GM12878 (cell line): ENCODE measurements at regions of chr3 and their contacts with region 1.

Region 1: DNA sequence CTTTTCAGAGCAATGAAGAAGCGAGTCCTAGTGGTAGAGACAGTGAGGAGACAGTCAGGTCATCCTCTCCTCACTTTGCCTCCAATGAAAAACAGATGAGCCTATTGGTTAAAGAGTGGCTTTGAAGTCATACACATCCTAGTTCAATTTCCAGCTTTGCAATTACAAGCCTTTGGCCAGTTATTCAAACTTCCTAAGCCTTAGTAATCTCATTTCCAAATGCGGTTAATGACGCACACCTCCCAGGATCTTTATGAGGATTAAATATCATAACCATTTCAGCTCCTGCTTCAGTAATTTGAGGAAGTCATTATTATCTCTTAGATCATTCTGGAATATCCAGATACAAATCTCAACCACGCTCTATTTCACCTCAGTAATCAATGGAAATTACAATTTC is 10.0 kb upstream of the ST6GAL1 start:
- DNase-seq: no peak
- ATAC-seq: no peak
- H3K4me3 ChIP-seq: no peak overlapping the region
- H3K27ac ChIP-seq: no peak overlapping the region
- H3K4me1 ChIP-seq: no peaks in the 10 kb centered on the region
- H3K27me3 ChIP-seq: no peaks in the 10 kb centered on the region; a peak in 1 of 4 replicates
- CTCF ChIP-seq: no peak
- EP300 ChIP-seq: no peak
- POLR2A ChIP-seq: no peak
- RAD21 ChIP-seq: no peak

Region 2: DNA sequence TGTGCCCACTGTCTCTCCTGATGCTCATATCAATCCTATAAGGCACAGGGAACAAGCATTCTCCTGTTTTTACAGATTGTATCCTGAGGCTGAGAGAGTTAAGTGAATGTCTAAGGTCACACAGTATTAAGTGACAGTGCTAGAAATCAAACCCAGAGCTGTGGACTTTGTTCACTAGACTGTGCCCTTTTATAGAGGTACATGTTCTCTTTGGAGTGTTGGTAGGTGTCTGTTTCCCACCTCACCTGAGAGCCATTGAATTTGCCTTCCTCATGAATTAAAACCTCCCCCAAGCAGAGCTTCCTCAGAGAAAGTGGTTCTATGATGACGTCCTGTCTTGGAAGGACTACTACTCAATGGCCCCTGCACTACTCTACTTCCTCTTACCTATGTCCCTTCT is 65.3 kb before region 1 on chr3:
- CTCF ChIA-PET with region 1: no interaction called
- POLR2A ChIA-PET with region 1: no interaction called
- RAD21 ChIA-PET with region 1: interaction called, 5 read pairs
- SMC1A ChIA-PET with region 1: interaction called, 4 read pairs
- in situ Hi-C with region 1: loop called (anchors 5 kb)
- intact Hi-C with region 1: loop called (anchors 5 kb)
- DNase-seq: no peak
- ATAC-seq: no peak
- H3K4me3 ChIP-seq: no peak overlapping the region
- H3K27ac ChIP-seq: no peak overlapping the region
- H3K4me1 ChIP-seq: no peaks in the 10 kb centered on the region
- H3K27me3 ChIP-seq: no peaks in the 10 kb centered on the region; a peak in 3 of 4 replicates
- CTCF ChIP-seq: no peak
- EP300 ChIP-seq: no peak
- POLR2A ChIP-seq: no peak
- RAD21 ChIP-seq: no peak

Region 3: DNA sequence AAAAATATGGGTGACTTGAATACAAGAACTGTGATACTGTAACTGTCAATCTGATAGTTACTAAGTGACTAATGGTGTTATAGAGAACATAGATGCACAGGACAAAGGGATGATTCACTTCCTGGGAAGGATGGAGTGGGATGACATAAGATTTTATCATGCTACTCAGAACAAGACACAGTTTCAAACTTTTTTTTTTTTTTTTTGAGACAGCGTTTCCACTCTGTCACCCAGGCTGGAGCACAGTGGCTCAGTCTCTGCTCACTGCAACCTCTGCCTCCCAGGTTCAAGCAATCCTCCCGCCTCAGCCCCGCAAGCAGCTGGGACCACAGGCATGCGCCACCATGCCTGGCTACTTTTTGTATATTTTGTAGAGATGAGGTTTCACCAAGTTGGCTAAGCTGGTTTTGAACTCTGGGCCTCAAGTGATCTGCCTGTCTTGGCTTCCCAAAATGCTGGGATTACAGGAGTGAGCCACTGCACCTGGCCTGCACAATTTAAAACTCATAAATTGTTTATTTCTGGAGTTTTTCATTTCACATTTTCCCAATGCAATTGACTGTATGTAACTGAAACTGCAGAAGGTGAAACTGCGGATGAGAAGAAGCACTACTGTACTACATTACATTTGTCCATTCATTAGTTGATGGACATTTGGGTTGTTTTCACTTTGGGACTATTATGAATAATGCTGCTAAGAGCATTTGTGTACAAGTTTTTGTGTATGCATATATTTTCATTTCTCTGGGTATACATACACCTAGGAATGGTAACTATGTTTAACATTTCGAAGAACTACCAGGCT is 37.2 kb before region 1 on chr3:
- CTCF ChIA-PET with region 1: no interaction called
- POLR2A ChIA-PET with region 1: no interaction called
- RAD21 ChIA-PET with region 1: no interaction called
- SMC1A ChIA-PET with region 1: no interaction called
- in situ Hi-C with region 1: no loop called
- intact Hi-C with region 1: no loop called
- DNase-seq: no peak
- ATAC-seq: no peak; the same call in 2 of the 3 replicates
- H3K4me3 ChIP-seq: no peak overlapping the region
- H3K27ac ChIP-seq: no peak overlapping the region
- H3K4me1 ChIP-seq: no peaks in the 10 kb centered on the region
- H3K27me3 ChIP-seq: no peaks in the 10 kb centered on the region; a peak in 1 of 4 replicates
- CTCF ChIP-seq: no peak
- EP300 ChIP-seq: no peak
- POLR2A ChIP-seq: no peak
- RAD21 ChIP-seq: no peak